Dendritic cell treated with granulocyte-macrophage colony-stimulating factor and Interleukin-4, amounts not matched to agents 40 ng/mL and 50 ng/mL, for 4 days (primary cell): ENCODE measurements at regions of chr3 and their contacts with region 1.

Region 1: DNA sequence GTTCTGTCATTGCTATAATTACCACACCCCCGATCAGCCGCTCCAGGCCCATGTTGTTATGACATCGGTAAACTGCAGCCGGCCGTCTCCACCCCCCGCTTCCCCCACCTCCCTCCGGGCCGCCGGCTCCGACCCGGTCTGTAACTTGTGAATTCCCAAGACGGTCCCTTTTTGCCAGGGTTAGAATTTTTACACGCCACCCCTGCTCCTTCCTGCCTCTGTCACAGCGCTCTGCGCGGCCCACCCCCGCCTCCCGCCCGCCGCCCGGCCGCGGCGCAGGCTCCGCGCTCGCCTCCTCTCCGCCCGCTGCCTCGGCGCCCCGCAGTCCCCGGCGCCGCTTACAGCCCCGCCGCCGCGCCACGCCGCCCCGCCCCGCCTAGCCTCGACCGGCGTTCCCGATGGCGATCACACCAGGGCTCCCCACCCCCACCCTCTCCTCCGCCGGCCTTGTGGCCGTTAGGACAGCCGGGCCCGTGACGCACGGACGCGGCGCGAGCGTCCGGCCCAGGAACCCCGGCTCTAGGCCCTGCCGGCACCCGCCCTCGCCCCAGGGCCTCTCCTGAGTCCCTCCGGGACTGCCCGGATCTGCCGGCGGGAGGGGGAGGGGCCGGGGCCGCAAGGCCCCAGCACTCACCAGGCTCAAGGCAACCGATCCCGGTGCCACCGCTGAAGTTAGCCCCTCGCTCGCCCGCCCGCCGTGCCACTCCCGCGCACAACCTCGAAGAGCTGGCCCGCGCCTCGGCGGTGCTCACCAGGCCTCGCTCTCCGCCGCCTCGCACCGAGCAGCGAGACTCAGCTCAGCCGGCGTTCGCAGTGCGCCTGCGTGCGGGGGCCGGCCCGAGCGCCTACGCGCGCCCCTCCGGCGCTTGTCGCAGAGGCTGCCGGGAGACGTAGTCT is at the start of gene KPNA1:
- H3K4me3 Mint-ChIP-seq: peak within 1 kb of the TSS; percentile 84
- H3K27ac Mint-ChIP-seq: peak within 1 kb of the TSS; percentile 82
- H3K4me1 Mint-ChIP-seq: peaks cover 40% of the 10 kb centered on the region
- H3K27me3 Mint-ChIP-seq: no peaks in the 10 kb centered on the region

Region 2: GRCh38 chr3:122383771-122384697 is 130.3 kb before region 1 on chr3 and contains the start of gene FAM162A:
- intact Hi-C with region 1: loop called (anchors 5 kb)
- H3K4me3 Mint-ChIP-seq: peak within 1 kb of the TSS; percentile 92
- H3K27ac Mint-ChIP-seq: peak within 1 kb of the TSS; percentile 94
- H3K4me1 Mint-ChIP-seq: peaks cover 38% of the 10 kb centered on the region
- H3K27me3 Mint-ChIP-seq: no peaks in the 10 kb centered on the region

Region 3: GRCh38 chr3:122415720-122416654 is 98.4 kb before region 1 on chr3 and contains the start of gene WDR5B:
- intact Hi-C with region 1: loop called (anchors 10 kb)
- H3K4me3 Mint-ChIP-seq: peak within 1 kb of the TSS; percentile 94
- H3K27ac Mint-ChIP-seq: peak within 1 kb of the TSS; percentile 94
- H3K4me1 Mint-ChIP-seq: peaks cover 47% of the 10 kb centered on the region
- H3K27me3 Mint-ChIP-seq: no peaks in the 10 kb centered on the region

Region 4: DNA sequence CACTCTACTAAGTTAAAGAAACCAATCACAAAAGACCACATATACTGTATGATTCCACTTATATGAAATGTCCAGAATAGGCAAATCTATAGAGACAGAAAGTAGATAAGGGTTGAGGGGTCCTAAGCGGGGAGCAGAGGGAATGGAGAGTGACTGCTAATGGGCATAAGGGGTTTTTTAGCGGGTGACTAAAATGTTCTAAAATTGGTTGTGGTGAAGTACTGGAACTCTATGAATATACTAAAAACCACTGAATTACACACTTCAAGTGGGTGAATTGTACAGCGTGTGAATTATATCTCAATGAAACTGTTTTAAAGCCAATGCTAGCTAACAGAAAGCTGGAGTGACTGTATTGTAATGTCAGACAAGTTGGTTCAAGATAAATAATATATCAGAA is 33.0 kb before region 1 on chr3:
- intact Hi-C with region 1: no loop called
- H3K4me3 Mint-ChIP-seq: no peak overlapping the region
- H3K27ac Mint-ChIP-seq: no peak overlapping the region
- H3K4me1 Mint-ChIP-seq: peaks cover 15% of the 10 kb centered on the region
- H3K27me3 Mint-ChIP-seq: no peaks in the 10 kb centered on the region

Region 5: DNA sequence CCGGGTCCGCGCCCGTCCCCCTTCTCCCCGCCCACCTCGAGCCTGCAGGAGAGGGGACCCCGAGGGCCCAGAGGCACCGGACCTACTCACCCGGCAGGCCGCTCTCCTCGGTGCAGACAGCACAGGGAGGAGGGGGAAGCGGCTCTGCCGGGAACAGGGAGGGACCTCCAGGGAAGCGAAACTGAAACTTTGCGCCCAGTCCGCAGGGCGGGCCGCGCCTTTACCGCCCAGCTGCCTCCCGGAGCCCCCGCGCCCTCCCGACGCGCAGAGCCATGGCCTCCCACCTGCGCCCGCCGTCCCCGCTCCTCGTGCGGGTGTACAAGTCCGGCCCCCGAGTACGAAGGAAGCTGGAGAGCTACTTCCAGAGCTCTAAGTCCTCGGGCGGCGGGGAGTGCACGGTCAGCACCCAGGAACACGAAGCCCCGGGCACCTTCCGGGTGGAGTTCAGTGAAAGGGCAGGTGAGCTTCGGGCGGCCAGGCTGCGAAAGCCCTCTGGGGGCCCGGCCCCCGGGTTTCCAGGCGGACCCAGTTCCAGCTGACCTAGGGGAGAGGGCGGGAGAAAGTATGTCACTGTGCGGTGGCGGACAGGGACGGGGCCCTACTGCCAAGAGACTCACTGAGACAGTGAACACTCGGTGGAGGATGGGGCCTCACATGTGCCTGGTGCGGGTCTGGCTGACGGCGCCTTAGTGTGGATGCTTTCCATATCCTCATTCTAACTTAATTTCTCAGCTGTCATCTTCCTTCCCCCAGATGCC is 50.0 kb after region 1 on chr3 and contains the starts of genes DTX3L and PARP9:
- intact Hi-C with region 1: loop called (anchors 2 kb)
- H3K4me3 Mint-ChIP-seq: peak within 1 kb of the TSS; percentile 87
- H3K27ac Mint-ChIP-seq: peak within 1 kb of the TSS; percentile 97
- H3K4me1 Mint-ChIP-seq: peaks cover 86% of the 10 kb centered on the region
- H3K27me3 Mint-ChIP-seq: no peaks in the 10 kb centered on the region

Region 6: DNA sequence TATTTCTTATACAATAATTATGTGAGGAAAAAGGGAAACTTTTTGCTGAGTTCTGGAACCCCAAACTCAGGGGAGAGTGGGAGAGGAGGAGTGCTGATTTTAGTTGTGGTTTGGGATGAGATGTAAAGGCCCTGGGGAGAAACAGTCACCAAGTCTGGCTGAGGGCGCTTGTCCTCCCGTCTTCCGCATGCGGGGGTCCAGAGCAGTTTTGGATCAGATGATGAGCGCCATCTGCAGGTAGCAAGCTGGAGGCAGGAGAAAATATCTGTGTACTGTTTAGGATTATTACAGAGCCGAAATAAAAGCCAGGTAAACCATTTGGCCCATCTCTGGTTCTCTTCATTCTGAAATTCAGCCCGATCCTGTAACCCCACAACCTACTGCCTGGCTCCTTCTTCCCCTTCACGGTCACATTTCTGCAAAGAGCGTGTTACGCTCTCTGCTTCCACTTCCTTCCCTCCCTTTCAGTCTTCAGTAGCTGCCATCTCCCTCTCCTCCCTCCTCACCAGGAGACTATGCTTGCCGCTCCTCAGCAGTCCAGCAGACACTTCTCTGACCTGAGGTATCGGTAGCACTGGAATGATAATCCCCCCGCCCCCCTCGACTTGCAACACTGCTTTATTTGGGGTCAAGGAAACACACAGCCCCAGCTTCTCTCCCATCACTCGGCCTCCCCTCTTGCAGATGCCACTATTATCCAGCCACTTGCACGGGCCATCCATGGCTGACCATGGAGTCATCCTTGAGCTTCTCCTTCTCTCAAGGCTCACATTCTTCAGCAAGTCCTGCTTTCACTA is 164.9 kb after region 1 on chr3:
- intact Hi-C with region 1: loop called (anchors 5 kb)
- H3K4me3 Mint-ChIP-seq: peak overlapping the region; percentile 94
- H3K27ac Mint-ChIP-seq: peak overlapping the region; percentile 94
- H3K4me1 Mint-ChIP-seq: peaks cover 57% of the 10 kb centered on the region
- H3K27me3 Mint-ChIP-seq: no peaks in the 10 kb centered on the region